Left ventricle myocardium inferior (tissue), 1 donor: ENCODE measurements at regions of chr3 and their contacts with region 1.

Region 1: GRCh38 chr3:128680602-128681368 is 30.2 kb upstream of the RPN1 start:
- DNase-seq: peak; percentile 100
- H3K4me3 ChIP-seq: peak overlapping the region; percentile 80
- H3K27ac ChIP-seq: peak overlapping the region; percentile 99
- H3K4me1 ChIP-seq: peaks cover 25% of the 10 kb centered on the region
- H3K27me3 ChIP-seq: no peaks in the 10 kb centered on the region
- CTCF ChIP-seq: peak; percentile 99

Region 2: DNA sequence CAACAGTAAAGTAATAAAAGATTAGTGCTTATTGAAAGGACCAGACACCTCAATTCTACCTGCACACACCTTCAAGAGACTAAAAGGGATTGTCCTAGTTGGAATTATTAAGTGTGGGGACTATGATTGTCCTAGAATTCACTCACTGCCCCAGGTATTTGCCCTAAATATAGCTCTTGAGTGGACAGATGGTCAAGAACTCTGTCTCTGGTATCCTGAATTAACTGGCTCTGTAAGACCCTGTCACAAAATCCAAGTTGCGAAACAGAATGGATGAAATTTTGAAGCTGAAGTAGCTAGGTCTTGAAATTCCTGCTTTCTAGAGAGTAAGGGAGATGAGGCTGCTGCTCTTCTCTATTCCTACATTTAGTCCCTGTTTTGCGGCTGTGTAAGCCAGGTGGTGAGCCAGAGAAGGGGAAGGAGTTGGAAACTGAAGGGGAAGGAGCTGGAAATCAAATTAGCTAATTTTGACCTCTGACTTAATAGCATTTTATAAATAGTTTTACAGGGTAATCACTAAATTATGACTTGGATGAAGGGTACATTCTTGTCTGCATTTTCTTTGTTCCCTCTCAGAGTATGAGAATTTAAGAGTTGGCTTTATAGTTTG is 731.2 kb before region 1 on chr3:
- intact Hi-C with region 1: no loop called
- DNase-seq: no peak
- H3K4me3 ChIP-seq: no peak overlapping the region
- H3K27ac ChIP-seq: peak overlapping the region; percentile 37
- H3K4me1 ChIP-seq: peaks cover 31% of the 10 kb centered on the region
- H3K27me3 ChIP-seq: no peaks in the 10 kb centered on the region
- CTCF ChIP-seq: no peak

Region 3: GRCh38 chr3:128617557-128618397 is 63.0 kb before region 1 on chr3:
- intact Hi-C with region 1: no loop called
- DNase-seq: peak; percentile 98
- H3K4me3 ChIP-seq: peak overlapping the region; percentile 88
- H3K27ac ChIP-seq: peak overlapping the region; percentile 91
- H3K4me1 ChIP-seq: peaks cover 33% of the 10 kb centered on the region
- H3K27me3 ChIP-seq: no peaks in the 10 kb centered on the region
- CTCF ChIP-seq: peak; percentile 97

Region 4: GRCh38 chr3:128794770-128795649 is 114.2 kb after region 1 on chr3:
- intact Hi-C with region 1: loop called (anchors 5 kb)
- DNase-seq: no peak
- H3K4me3 ChIP-seq: no peak overlapping the region
- H3K27ac ChIP-seq: peak overlapping the region; percentile 68
- H3K4me1 ChIP-seq: peaks cover 72% of the 10 kb centered on the region
- H3K27me3 ChIP-seq: no peaks in the 10 kb centered on the region
- CTCF ChIP-seq: peak; percentile 86